Heart left ventricle (tissue), 16 donors: ENCODE measurements at regions of chrX and their contacts with region 1.

Region 1: DNA sequence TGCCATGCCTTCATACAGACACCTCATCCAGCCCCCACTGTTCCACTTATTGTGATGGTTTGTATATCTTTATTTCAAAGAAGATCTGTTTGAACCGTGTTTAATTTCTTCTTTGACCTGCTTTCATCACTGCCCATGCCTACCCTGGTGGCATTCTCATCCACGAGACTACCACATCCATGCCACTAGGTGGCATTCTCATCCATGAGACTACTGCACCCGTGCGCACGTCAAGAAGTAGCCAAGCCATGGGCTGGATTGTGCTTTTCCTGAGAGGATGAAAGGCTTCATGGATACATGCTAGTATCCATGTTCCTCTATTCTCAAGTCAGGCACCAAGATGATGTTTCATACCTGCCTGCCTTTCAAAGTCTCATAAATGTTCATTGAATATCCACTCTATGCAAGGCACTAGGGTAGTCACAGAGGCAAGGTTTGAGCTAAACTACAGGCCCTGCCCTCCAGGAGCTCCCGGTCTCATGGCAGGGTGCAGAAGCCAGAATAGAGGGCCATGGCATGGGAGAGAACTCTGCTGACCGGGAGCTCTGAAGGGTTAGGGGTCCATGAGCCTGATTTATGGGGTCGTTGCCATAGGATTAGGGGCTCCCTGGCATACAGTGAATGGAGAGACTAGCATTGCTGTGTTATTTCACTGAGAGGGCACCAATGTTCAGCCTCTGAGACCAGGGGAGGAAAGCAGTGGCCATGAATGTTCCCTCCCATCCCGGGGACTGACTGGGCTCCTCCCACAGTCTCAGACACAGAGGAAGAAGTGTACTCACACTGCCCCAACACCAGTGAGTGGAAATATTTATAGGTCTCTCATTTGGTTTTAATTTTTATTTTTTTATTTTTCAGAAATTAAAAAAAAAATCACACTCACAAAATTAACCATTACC is 24.8 kb upstream of the EOLA2 start:
- DNase-seq: peak in 4 of 5 donors; percentile 31 to 54 (median 42)
- ATAC-seq: peak in 3 of 4 donors; percentile 86 to 91 (median 89)
- H3K4me3 ChIP-seq: no peak overlapping the region
- H3K27ac ChIP-seq: peak overlapping the region in 1 of 12 donors; percentile 48
- H3K4me1 ChIP-seq: peaks cover 0 to 6% (median 0%) of the 10 kb centered on the region in 12 donors
- H3K27me3 ChIP-seq: no peaks in the 10 kb centered on the region
- CTCF ChIP-seq: peak; percentile 41 to 71 (median 60)
- POLR2A ChIP-seq: no peak

Region 2: GRCh38 chrX:150200820-150201287 is 237.7 kb after region 1 on chrX:
- intact Hi-C with region 1: loop called in 4 of 10 experiments (anchors 5 to 10 kb)
- DNase-seq: peak in 2 of 5 donors; percentile 67 to 79
- ATAC-seq: peak in 3 of 4 donors; percentile 71 to 94 (median 81)
- H3K4me3 ChIP-seq: no peak overlapping the region
- H3K27ac ChIP-seq: no peak overlapping the region
- H3K4me1 ChIP-seq: peaks cover 0 to 4% (median 0%) of the 10 kb centered on the region in 12 donors
- H3K27me3 ChIP-seq: peaks cover 0 to 3% (median 0%) of the 10 kb centered on the region in 9 donors
- CTCF ChIP-seq: no peak
- POLR2A ChIP-seq: no peak

Region 3: DNA sequence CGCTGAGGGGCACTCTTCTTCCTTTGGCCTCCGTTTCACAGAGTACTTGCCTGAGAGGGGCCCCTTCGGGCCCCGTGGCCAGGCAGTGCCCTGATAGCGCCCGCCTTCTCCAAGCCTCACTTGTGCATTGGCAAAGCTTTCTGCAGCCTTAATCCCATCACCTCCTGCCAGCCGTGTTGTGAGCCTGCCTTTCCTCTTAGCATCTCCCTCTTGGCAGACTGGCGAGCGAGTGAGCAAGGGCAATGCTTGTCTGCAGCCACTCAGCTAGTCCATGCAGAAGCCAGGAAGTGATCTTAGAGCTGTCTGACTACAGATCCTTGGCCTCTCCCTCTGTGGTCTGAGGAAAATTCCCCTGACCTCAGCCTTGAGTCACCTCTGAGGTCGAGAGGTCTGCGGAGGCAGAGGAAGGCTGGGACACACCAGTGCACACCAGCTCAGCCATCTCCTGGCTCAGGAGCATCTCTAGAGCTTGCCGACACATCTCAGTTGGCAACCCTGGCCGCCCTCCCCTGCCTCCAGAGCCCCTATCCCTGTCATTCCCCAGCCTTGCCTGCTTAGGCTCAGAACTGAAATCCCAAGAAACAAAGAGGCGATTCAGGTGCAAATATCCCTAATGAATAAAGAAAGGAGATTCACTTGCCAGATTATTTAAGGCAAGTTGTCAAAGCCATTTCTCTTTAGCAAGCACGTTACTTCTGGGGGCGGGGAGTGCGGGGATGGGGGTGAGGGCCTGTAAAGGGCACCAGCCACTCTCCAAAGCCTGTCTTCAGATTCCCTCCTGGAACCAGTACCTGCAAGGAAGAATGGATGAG is 256.5 kb after region 1 on chrX:
- intact Hi-C with region 1: loop called in 1 of 10 experiments (anchors 10 kb)
- DNase-seq: peak in 1 of 5 donors; percentile 38
- ATAC-seq: peak in 1 of 4 donors; percentile 33
- H3K4me3 ChIP-seq: no peak overlapping the region
- H3K27ac ChIP-seq: no peak overlapping the region
- H3K4me1 ChIP-seq: no peaks in the 10 kb centered on the region
- H3K27me3 ChIP-seq: peaks cover 0 to 8% (median 0%) of the 10 kb centered on the region in 9 donors
- CTCF ChIP-seq: no peak
- POLR2A ChIP-seq: no peak

Region 4: DNA sequence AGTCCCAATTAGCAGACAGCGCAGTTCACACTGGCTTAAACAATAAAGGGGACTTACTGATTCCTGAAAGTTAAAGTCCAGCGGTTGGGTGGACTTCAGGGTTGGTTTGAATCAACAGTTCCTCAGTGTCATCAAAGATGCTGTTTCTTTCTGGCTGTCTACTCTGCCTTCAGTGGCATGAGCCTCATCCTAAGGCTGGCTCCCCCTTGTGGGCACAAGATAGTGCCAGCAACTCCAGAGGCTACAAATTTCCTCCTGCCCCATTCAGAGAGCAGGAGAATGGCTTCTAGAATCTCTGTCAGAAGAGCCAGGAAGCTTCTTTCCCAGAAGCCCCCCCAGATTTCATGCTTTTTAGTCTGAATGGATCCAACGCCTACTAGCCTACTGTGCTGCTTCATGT is 522.9 kb after region 1 on chrX:
- intact Hi-C with region 1: loop called in 4 of 10 experiments (anchors 5 to 10 kb)
- DNase-seq: peak in 4 of 5 donors; percentile 22 to 57 (median 40)
- ATAC-seq: peak in 3 of 4 donors; percentile 64 to 73 (median 68)
- H3K4me3 ChIP-seq: no peak overlapping the region
- H3K27ac ChIP-seq: no peak overlapping the region
- H3K4me1 ChIP-seq: no peaks in the 10 kb centered on the region
- H3K27me3 ChIP-seq: no peaks in the 10 kb centered on the region
- CTCF ChIP-seq: peak; percentile 40 to 64 (median 54)
- POLR2A ChIP-seq: no peak

Region 5: DNA sequence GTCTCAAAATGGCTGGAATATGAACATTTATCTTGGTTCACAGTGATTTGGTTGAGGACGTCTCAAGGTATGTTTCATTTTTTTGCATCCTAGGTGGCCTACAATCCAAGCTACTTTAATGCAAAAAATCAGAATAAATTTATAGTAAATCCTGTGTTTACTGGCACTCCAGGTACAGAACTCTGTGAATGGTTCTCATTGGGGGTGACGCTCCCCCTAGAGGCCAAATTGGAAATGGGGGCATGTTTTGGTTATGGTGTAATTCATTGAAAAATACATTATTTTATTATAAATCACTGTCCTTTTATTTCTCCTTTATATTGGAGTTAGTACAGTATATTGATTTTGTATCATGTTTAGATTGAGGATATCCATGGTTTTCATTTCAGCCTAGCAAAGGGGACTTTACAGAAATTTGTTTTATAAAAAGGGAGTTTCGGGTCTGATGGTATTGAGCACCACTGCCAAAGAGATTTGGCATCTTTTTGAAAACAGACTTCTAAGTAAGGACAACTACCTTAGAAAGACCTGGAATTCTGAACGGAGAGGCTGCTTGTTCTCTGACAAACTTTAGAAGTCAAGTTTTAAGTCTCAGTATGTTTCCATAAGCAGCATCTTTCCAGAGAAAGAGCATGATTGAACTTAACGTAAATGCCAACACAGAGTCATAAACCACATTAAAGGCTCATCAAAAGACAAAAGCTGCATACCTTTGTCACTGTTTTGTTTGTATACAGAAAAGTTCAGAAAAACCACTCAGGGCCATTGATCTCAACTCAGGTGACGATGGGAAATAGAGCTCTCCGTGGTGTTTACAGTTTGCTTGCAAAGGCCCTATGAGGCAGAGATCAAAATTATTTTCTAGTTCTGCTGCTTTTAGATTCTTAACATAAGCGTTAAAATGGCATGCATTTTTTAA is 624.7 kb after region 1 on chrX:
- intact Hi-C with region 1: loop called in 2 of 10 experiments (anchors 2 to 5 kb)
- DNase-seq: peak in 1 of 5 donors; percentile 20
- ATAC-seq: no peak
- H3K4me3 ChIP-seq: no peak overlapping the region
- H3K27ac ChIP-seq: no peak overlapping the region
- H3K4me1 ChIP-seq: peaks cover 0 to 10% (median 0%) of the 10 kb centered on the region in 12 donors
- H3K27me3 ChIP-seq: peaks cover 0 to 10% (median 0%) of the 10 kb centered on the region in 9 donors
- CTCF ChIP-seq: peak; percentile 43 to 74 (median 58)
- POLR2A ChIP-seq: no peak

Region 6: GRCh38 chrX:150683536-150684146 is 720.5 kb after region 1 on chrX:
- intact Hi-C with region 1: loop called in 5 of 10 experiments (anchors 5 to 10 kb)
- DNase-seq: no peak
- ATAC-seq: no peak
- H3K4me3 ChIP-seq: no peak overlapping the region
- H3K27ac ChIP-seq: no peak overlapping the region
- H3K4me1 ChIP-seq: no peaks in the 10 kb centered on the region
- H3K27me3 ChIP-seq: peaks cover 0 to 4% (median 0%) of the 10 kb centered on the region in 9 donors
- CTCF ChIP-seq: peak; percentile 15 to 56 (median 47)
- POLR2A ChIP-seq: no peak

Region 7: DNA sequence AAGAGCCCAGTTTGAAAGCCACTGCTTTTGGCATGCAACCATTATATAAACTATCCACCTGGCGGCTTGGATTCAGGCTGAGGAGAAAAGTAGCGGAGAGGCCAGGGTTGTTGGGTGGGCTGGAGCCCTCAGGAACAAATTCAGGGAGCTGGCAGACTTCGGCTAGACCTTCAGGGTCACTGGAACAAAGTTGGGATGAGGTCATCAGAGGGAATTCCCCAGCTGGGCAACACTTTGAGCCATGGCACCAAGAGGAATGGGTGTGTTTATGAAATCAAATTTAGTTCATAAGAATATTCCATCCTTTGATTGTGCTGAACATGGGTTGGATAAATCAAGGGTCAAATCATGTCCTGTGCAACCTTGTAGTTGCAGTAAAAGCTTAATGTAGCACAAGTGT is 752.1 kb after region 1 on chrX:
- intact Hi-C with region 1: loop called in 1 of 10 experiments (anchors 10 kb)
- DNase-seq: no peak
- ATAC-seq: no peak
- H3K4me3 ChIP-seq: no peak overlapping the region
- H3K27ac ChIP-seq: no peak overlapping the region
- H3K4me1 ChIP-seq: peaks cover 0 to 5% (median 0%) of the 10 kb centered on the region in 12 donors
- H3K27me3 ChIP-seq: no peaks in the 10 kb centered on the region
- CTCF ChIP-seq: no peak
- POLR2A ChIP-seq: no peak